Natural killer cell (primary cell): ENCODE measurements at regions of chr22 and their contacts with region 1.

Region 1: DNA sequence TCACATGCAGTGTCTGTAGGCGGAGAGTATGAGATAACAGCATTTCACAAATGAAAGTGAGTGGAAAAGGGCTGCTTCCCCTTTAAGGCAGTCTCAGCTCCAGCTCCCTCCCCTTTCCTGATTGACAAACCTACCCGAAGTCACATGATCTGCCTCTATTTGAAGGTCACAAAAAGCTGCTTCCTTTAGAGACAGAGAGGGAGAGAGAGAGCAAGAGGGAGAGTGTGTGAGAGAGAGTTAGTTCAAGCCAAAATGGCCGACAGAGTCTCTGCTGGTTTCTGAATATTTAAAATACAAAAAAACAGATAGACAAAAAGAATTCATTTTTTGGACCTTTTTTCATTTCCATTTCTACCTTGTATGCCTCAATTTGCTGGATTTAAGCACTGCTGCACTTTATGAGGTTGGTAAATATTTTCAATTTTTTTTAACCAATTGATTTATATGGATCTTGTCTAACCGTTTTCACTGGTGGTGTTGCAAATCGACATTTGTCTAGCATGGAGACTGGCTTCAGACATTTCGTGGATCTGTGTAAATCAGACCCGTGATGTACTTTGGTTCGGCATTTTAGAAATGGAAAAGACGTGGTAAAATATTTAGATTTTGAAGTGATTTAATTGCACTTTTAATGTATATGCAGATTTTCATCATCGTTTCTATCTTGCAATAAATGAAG is at the start of gene TNRC6B:
- DNase-seq: peak; percentile 42 to 95
- ATAC-seq: peak; percentile 88 to 96 (median 96)
- H3K4me3 ChIP-seq: peak within 1 kb of the TSS; percentile 53
- H3K4me3 Mint-ChIP-seq: peak within 1 kb of the TSS; percentile 97
- H3K27ac ChIP-seq: peak within 1 kb of the TSS; percentile 65
- H3K27ac Mint-ChIP-seq: peak within 1 kb of the TSS; percentile 88 to 91
- H3K4me1 ChIP-seq: peaks cover 32% of the 10 kb centered on the region
- H3K4me1 Mint-ChIP-seq: peaks cover 55 to 59% of the 10 kb centered on the region in 2 donors
- H3K27me3 ChIP-seq: no peaks in the 10 kb centered on the region
- H3K27me3 Mint-ChIP-seq: no peaks in the 10 kb centered on the region
- CTCF ChIP-seq: no peak
- total RNA-seq, gene TNRC6B: 112 to 141 (median 138) TPM

Region 2: DNA sequence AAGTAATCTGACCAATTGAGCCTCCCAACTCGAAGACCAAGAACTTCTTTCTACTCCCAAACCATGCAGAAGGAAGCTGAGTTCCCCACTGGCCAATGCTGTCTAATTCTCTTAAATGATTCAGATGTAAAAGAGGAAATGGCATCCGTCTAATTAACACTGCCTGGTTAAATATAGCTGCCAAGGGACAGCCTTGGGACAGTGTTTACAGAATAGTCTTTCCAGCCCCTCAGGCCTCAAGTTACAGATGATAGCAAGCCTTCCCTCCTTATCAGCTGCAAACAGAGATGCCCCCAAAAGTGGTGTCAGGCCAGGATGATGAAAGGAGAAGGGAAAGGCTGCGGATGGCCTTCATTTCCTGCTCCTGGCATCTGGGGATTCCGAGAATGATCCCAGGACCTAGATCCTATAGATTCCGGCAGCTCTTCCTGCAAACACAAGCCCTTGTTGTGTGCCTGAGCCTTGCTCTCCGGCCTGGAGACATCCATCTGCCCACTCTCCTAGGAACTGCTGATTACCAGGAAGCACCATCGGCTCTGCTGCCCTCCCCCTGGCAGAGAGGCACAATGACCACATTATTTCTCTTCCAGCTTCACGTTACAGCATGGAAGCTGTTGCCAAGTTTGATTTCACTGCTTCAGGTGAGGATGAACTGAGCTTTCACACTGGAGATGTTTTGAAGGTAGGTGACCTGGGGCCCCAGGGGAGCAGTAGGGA is 231.2 kb before region 1 on chr22:
- intact Hi-C with region 1: no loop called
- DNase-seq: no peak
- ATAC-seq: no peak
- H3K4me3 ChIP-seq: no peak overlapping the region
- H3K4me3 Mint-ChIP-seq: no peak overlapping the region
- H3K27ac ChIP-seq: no peak overlapping the region
- H3K27ac Mint-ChIP-seq: no peak overlapping the region
- H3K4me1 ChIP-seq: peaks cover 40% of the 10 kb centered on the region
- H3K4me1 Mint-ChIP-seq: peaks cover 75% of the 10 kb centered on the region in 2 donors
- H3K27me3 ChIP-seq: no peaks in the 10 kb centered on the region
- H3K27me3 Mint-ChIP-seq: no peaks in the 10 kb centered on the region
- CTCF ChIP-seq: no peak

Region 3: GRCh38 chr22:40116496-40117200 is 61.2 kb before region 1 on chr22:
- intact Hi-C with region 1: loop called (anchors 1 kb)
- DNase-seq: peak in 1 of 2 donors; percentile 85
- ATAC-seq: peak; percentile 59 to 66 (median 60)
- H3K4me3 ChIP-seq: no peak overlapping the region
- H3K4me3 Mint-ChIP-seq: peak overlapping the region; percentile 38
- H3K27ac ChIP-seq: no peak overlapping the region
- H3K27ac Mint-ChIP-seq: peak overlapping the region; percentile 53 to 80
- H3K4me1 ChIP-seq: peaks cover 24% of the 10 kb centered on the region
- H3K4me1 Mint-ChIP-seq: peaks cover 56 to 69% of the 10 kb centered on the region in 2 donors
- H3K27me3 ChIP-seq: no peaks in the 10 kb centered on the region
- H3K27me3 Mint-ChIP-seq: no peaks in the 10 kb centered on the region
- CTCF ChIP-seq: no peak

Region 4: DNA sequence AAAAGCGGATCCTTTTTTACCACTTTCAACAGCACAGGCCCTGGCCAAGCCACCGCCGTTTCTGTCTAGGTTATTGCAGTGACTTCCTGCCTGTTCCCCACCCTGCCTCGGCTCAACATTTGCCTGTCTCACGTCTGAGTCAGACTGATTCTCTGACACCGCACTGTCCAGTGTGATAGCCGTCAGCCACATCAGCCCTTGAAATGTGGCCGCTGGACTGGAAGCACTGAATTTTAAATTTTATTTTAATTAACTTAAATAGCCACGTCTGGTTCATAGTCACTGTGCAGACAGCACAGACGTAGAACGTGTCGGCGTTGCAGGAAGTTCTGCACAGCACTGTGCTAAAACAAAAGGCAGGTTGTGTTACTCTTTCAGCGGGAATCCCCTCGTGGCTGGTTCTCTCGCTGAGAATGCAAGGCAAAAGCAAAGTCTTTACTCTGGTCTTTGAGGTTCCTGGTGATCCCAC is 112.1 kb after region 1 on chr22:
- intact Hi-C with region 1: loop called (anchors 5 kb)
- DNase-seq: peak; percentile 60 to 91
- ATAC-seq: peak; percentile 87 to 93 (median 90)
- H3K4me3 ChIP-seq: no peak overlapping the region
- H3K4me3 Mint-ChIP-seq: peak overlapping the region; percentile 75
- H3K27ac ChIP-seq: peak overlapping the region; percentile 81
- H3K27ac Mint-ChIP-seq: peak overlapping the region; percentile 91 to 93
- H3K4me1 ChIP-seq: peaks cover 24% of the 10 kb centered on the region
- H3K4me1 Mint-ChIP-seq: peaks cover 24 to 31% of the 10 kb centered on the region in 2 donors
- H3K27me3 ChIP-seq: no peaks in the 10 kb centered on the region
- H3K27me3 Mint-ChIP-seq: no peaks in the 10 kb centered on the region
- CTCF ChIP-seq: no peak

Region 5: DNA sequence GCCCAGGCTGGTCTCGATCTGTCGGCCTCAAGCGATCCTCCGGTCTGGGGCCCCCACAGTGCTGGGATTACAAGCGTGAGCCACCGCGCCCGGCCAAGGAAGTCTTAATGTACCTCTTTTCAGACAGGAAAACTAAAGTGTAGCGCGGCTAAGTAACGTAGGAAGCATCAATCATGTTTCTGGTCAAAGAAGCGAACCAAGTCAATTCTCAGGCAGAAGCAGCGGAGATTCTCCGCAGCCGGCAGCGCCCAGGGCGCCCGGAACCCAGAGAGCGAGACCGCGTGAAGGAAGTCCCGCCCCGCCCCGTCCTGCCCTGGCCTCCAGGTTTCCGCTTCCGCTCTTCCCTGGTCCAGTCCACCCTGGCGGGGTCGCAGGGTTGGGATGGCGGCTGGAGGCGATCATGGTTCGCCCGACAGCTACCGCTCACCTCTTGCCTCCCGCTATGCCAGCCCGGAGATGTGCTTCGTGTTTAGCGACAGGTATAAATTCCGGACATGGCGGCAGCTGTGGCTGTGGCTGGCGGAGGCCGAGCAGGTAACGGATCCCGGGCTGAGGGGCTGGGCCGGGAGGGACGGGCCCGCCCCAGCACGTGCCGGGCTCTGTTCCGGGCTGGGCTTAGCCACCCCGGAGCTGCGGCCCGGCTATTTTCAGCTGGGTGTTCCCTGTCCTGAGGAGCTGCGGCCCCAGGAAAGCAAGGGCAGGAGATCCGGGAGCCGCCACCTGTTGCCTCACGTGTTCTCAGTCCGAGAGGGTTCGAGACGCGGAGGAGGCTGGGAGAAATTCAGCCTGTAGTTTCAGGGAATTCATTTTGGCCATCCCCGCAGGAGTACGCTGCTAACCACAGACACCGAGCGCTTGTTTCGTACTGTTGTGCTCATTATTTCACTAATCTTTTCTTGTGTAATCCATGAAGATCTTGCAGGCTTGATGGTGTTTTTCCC is 168.6 kb after region 1 on chr22 and contains the start of gene ADSL:
- intact Hi-C with region 1: loop called (anchors 5 kb)
- DNase-seq: peak; percentile 74 to 90
- ATAC-seq: peak; percentile 89 to 93 (median 91)
- H3K4me3 ChIP-seq: peak within 1 kb of the TSS; percentile 76
- H3K4me3 Mint-ChIP-seq: peak within 1 kb of the TSS; percentile 98
- H3K27ac ChIP-seq: peak within 1 kb of the TSS; percentile 65
- H3K27ac Mint-ChIP-seq: peak within 1 kb of the TSS; percentile 89
- H3K4me1 ChIP-seq: peaks cover 25% of the 10 kb centered on the region
- H3K4me1 Mint-ChIP-seq: peaks cover 23 to 29% of the 10 kb centered on the region in 2 donors
- H3K27me3 ChIP-seq: no peaks in the 10 kb centered on the region
- H3K27me3 Mint-ChIP-seq: no peaks in the 10 kb centered on the region
- CTCF ChIP-seq: no peak
- total RNA-seq, gene ADSL: 31.3 to 49.8 (median 41.2) TPM